ENCODE measurements at regions of chr6 and their contacts with region 1.

Region 1: DNA sequence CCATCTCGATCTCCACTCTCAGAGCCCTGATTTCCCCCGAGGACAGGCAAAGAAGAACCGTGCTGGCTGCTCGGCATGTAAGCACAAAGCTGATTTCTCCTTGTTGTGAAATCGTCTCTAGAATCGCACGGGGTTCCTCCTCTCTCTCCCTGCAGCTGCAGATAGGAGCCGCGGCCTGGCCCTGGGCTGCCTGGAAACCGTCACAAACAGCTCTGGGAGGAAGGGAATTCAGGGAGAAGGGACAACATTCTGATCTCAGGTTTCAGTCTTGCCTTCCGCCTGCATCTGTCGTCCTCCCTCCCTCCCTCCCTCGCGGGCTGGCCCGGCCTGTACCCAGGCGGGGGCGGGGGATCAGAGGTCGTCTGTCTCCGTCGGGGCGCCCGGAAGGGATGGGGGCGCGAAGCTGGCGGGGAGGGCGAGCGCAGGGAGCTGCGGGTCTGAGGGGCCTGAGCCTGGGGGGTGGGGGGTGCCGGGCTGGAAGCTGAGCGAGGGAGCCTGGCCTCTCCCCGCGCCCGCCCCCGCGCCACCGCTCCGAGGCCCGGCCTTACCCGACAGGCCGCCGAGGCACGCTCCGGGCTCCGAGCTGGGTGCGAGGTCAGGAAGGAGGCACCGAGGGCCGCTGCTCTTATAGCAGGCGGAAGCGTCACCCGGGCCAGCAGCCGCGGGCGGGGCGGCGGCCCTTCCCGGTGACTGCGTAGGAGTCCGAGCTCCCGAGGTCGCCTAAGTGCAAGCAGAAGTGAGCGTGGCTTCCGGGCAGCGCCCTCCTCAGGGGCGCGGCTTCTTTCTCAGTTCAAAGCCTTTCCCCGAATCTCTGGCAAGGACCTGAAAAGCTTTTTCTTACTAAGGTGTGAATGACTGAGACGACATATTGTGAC is at the start of gene SERPINB1:
- DNase-seq: peak; percentile 92
- ATAC-seq: peak; percentile 89
- H3K4me3 Mint-ChIP-seq: peak within 1 kb of the TSS; percentile 89
- H3K27ac Mint-ChIP-seq: peak within 1 kb of the TSS; percentile 83
- H3K4me1 Mint-ChIP-seq: peaks cover 65% of the 10 kb centered on the region
- H3K27me3 Mint-ChIP-seq: no peaks in the 10 kb centered on the region
- total RNA-seq, gene SERPINB1: 55.2 to 65.7 TPM

Region 2: DNA sequence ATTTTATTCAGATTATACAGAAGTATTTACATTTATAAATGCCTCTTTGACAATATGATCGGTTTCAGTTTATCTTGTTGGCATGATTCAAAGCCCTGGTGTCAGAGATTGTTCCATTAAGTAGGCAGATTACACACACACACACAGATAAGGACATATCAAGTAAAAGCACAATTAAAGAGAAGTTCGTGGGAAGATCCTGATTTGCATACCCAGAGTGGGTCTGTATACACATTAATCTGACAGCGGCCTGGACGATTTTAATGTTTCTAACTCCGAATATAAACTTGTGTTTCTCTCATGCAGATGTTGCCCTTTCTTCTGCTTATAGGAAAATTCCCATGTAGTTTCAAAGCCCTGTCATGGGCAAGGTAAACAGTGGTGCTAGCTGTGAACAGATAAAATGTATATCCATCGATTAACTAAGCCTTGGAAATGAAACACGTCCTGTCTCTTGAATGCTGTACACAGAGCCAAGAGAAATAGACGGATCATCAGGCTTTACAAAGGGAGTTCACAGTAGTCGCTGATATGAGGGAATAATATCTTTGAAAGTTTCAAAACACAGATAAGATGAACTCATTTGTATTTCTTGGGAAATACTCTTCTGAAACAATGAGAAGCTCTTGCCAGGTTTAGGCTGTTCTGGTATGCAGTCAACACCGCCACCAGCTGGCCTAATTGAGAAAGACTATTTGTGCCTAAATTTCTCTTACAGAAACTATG is 487.9 kb before region 1 on chr6:
- CTCF ChIA-PET with region 1: no interaction called
- DNase-seq: peak; percentile 70
- ATAC-seq: no peak
- H3K4me3 Mint-ChIP-seq: no peak overlapping the region
- H3K27ac Mint-ChIP-seq: no peak overlapping the region
- H3K4me1 Mint-ChIP-seq: no peaks in the 10 kb centered on the region
- H3K27me3 Mint-ChIP-seq: no peaks in the 10 kb centered on the region

Region 3: GRCh38 chr6:2765166-2765895 is 76.2 kb before region 1 on chr6 and contains the start of gene WRNIP1:
- CTCF ChIA-PET with region 1: interaction called, 12 read pairs
- DNase-seq: peak; percentile 99
- ATAC-seq: peak; percentile 89
- H3K4me3 Mint-ChIP-seq: peak within 1 kb of the TSS; percentile 95
- H3K27ac Mint-ChIP-seq: peak within 1 kb of the TSS; percentile 98
- H3K4me1 Mint-ChIP-seq: peaks cover 47% of the 10 kb centered on the region
- H3K27me3 Mint-ChIP-seq: no peaks in the 10 kb centered on the region
- total RNA-seq, gene WRNIP1: 48.7 to 53.3 TPM

Region 4: GRCh38 chr6:2827142-2827541 is 14.4 kb before region 1 on chr6:
- CTCF ChIA-PET with region 1: interaction called, 19 read pairs
- DNase-seq: no peak
- ATAC-seq: no peak
- H3K4me3 Mint-ChIP-seq: no peak overlapping the region
- H3K27ac Mint-ChIP-seq: no peak overlapping the region
- H3K4me1 Mint-ChIP-seq: no peaks in the 10 kb centered on the region
- H3K27me3 Mint-ChIP-seq: no peaks in the 10 kb centered on the region

Region 5: GRCh38 chr6:2917065-2917464 is 75.6 kb after region 1 on chr6:
- CTCF ChIA-PET with region 1: interaction called, 96 read pairs
- DNase-seq: peak; percentile 14
- ATAC-seq: no peak
- H3K4me3 Mint-ChIP-seq: no peak overlapping the region
- H3K27ac Mint-ChIP-seq: no peak overlapping the region
- H3K4me1 Mint-ChIP-seq: peaks cover 16% of the 10 kb centered on the region
- H3K27me3 Mint-ChIP-seq: no peaks in the 10 kb centered on the region

Region 6: DNA sequence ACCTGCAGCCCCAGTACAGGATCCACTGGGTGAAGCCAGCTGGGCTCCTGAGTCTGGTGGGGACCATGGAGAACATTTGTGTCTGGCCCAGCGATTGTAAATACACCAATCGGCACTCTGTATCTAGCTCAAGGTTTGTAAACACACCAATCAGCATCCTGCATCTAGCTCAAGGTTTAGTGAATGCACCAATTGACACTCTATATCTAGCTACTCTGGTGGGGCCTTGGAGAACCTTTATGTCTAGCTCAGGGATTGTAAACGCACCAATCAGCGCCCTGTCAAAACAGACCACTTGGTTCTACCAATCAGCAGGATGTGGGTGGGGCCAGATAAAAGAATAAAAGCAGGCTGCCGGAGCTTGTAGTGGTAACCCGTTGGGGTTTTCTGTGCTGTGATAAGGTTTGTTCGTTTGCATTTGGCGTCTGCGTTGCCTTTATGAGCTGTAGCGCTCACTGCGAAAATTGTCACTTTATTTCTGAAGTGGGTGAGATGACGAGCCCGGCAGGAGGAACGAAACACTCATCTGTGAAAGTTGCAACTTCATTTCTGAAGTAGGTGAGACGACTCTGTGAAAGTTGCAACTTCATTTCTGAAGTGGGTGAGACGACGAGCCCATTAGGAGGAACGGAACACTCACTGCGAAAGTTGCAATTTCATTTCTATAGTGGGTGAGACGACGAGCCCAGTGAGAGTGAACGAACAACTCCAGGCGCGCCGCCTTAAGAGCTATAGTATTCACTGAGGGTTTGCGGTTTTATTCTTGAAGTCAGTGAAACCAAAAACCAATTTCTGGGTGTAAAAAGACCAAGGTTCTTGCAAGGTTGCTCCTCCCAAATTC is 98.7 kb after region 1 on chr6:
- CTCF ChIA-PET with region 1: interaction called, 115 read pairs
- DNase-seq: peak; percentile 92
- ATAC-seq: peak; percentile 90
- H3K4me3 Mint-ChIP-seq: peak overlapping the region; percentile 73
- H3K27ac Mint-ChIP-seq: peak overlapping the region; percentile 99
- H3K4me1 Mint-ChIP-seq: peaks cover 56% of the 10 kb centered on the region
- H3K27me3 Mint-ChIP-seq: peaks cover 29% of the 10 kb centered on the region